Mammary epithelial cell (primary cell): ENCODE measurements at regions of chr19 and their contacts with region 1.

Region 1: GRCh38 chr19:10461047-10461790 is 40.9 kb downstream of the PDE4A start:
- DNase-seq: peak; percentile 90
- H3K4me3 ChIP-seq: peak overlapping the region; percentile 17 to 41 (median 37)
- H3K27ac ChIP-seq: no peak overlapping the region
- H3K4me1 ChIP-seq: peaks cover 7% of the 10 kb centered on the region
- H3K27me3 ChIP-seq: no peaks in the 10 kb centered on the region
- CTCF ChIP-seq: no peak

Region 2: GRCh38 chr19:10395003-10395402 is 66.2 kb before region 1 on chr19:
- CTCF ChIA-PET with region 1: no interaction called
- dilution Hi-C with region 1: no loop called
- in situ Hi-C with region 1: no loop called
- intact Hi-C with region 1: no loop called
- DNase-seq: no peak
- H3K4me3 ChIP-seq: no peak overlapping the region
- H3K27ac ChIP-seq: no peak overlapping the region
- H3K4me1 ChIP-seq: no peaks in the 10 kb centered on the region
- H3K27me3 ChIP-seq: no peaks in the 10 kb centered on the region
- CTCF ChIP-seq: no peak

Region 3: DNA sequence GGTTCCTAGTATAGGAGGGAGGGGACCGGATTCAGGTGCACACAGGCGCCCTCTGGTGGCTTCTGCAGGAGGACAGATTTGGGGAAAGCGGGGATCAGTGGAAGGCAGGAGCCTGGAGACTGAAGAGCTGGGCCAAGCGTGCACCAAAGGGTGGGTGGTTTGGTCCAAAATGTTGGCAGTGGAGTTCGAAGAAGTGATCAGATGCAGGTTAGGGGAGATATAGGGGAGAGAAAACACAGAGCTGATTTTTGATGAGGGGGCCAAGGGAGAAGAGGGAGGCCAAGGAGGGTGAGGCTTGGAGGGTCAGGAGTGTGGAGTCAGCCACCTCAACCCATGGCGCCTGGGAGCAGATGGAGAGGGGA is 403.3 kb after region 1 on chr19:
- CTCF ChIA-PET with region 1: interaction called, 23 read pairs
- dilution Hi-C with region 1: no loop called
- in situ Hi-C with region 1: no loop called
- intact Hi-C with region 1: no loop called
- DNase-seq: peak; percentile 47
- H3K4me3 ChIP-seq: no peak overlapping the region
- H3K27ac ChIP-seq: no peak overlapping the region
- H3K4me1 ChIP-seq: peaks cover 4% of the 10 kb centered on the region
- H3K27me3 ChIP-seq: no peaks in the 10 kb centered on the region
- CTCF ChIP-seq: peak; percentile 93 to 95

Region 4: GRCh38 chr19:10968527-10969135 is 507.4 kb after region 1 on chr19:
- CTCF ChIA-PET with region 1: no interaction called
- dilution Hi-C with region 1: no loop called
- in situ Hi-C with region 1: no loop called
- intact Hi-C with region 1: no loop called
- DNase-seq: no peak
- H3K4me3 ChIP-seq: no peak overlapping the region
- H3K27ac ChIP-seq: no peak overlapping the region
- H3K4me1 ChIP-seq: no peaks in the 10 kb centered on the region
- H3K27me3 ChIP-seq: no peaks in the 10 kb centered on the region
- CTCF ChIP-seq: peak in 1 of 2 donors; percentile 25